Breast epithelium (tissue), 4 donors: ENCODE measurements at regions of chr15 and their contacts with region 1.

Region 1: GRCh38 chr15:92062505-92062904 is 209.0 kb downstream of the SLCO3A1 start:
- DNase-seq: no peak
- H3K4me3 ChIP-seq: no peak overlapping the region
- H3K27ac ChIP-seq: no peak overlapping the region
- H3K4me1 ChIP-seq: no peaks in the 10 kb centered on the region
- H3K27me3 ChIP-seq: no peaks in the 10 kb centered on the region
- CTCF ChIP-seq: no peak
- POLR2A ChIP-seq: no peak

Region 2: GRCh38 chr15:91940492-91941381 is 121.8 kb before region 1 on chr15:
- intact Hi-C with region 1: no loop called
- DNase-seq: no peak
- H3K4me3 ChIP-seq: no peak overlapping the region
- H3K27ac ChIP-seq: peak overlapping the region; percentile 71 to 89
- H3K4me1 ChIP-seq: peaks cover 19 to 25% of the 10 kb centered on the region in 2 donors
- H3K27me3 ChIP-seq: no peaks in the 10 kb centered on the region
- CTCF ChIP-seq: no peak
- POLR2A ChIP-seq: no peak

Region 3: DNA sequence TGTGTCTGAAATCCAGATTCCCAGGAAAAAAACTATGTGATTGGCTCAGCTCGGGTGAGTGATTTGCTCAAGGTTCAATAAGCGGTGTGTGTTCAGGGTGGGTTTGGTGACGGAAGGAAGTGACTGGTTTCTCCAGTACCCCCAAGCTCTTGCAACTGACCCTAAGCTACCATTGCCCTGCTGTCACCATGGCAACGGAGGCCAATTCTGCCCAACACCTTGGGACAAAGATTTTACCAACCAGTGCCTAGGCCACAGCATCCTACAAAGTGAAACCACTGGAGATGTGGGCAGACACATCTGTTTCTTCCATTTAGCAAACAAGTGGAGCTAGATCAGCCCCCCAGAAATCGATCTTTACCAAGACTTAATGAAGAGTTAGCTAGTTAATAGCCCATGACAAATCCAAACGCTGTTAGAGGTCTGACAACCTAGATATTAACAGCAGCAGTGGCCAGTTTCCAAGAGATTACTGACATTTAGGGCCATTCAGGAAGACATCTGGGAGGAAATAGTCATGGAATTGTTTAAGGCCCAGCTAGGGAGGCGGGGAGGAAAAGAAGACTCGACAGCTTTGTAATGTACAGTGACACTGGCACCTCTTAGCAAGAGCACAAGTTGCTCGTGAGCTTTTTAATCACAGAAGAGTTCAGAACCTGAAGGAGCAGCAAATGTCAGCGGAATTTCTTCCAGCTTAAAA is 13.1 kb before region 1 on chr15:
- intact Hi-C with region 1: loop called (anchors 1 kb)
- DNase-seq: no peak
- H3K4me3 ChIP-seq: no peak overlapping the region
- H3K27ac ChIP-seq: peak overlapping the region in 1 of 2 donors; percentile 44
- H3K4me1 ChIP-seq: no peaks in the 10 kb centered on the region
- H3K27me3 ChIP-seq: no peaks in the 10 kb centered on the region
- CTCF ChIP-seq: no peak
- POLR2A ChIP-seq: no peak

Region 4: DNA sequence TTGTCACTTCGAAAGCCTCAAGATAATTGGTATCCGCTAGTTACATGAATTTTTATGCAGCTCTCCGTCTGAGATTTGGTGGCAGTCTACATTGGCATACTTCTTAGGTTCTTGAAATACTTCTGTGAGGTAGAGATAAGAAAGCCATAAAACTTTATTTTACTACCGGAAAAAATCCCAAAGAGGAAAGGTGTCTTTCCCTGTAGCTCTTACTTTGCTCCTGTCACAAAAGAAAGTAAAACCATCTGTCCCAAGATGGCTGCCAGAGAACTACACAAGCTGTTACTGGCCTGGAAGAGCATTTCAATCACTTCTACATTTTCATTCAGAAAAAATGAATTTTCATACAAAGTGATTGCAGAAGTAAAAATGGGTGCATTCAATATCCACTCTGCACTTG is 116.4 kb after region 1 on chr15:
- intact Hi-C with region 1: no loop called
- DNase-seq: no peak
- H3K4me3 ChIP-seq: no peak overlapping the region
- H3K27ac ChIP-seq: no peak overlapping the region
- H3K4me1 ChIP-seq: no peaks in the 10 kb centered on the region
- H3K27me3 ChIP-seq: no peaks in the 10 kb centered on the region
- CTCF ChIP-seq: no peak
- POLR2A ChIP-seq: no peak